Adrenal gland (tissue), 19 donors: ENCODE measurements at regions of chr2 and their contacts with region 1.

Region 1: DNA sequence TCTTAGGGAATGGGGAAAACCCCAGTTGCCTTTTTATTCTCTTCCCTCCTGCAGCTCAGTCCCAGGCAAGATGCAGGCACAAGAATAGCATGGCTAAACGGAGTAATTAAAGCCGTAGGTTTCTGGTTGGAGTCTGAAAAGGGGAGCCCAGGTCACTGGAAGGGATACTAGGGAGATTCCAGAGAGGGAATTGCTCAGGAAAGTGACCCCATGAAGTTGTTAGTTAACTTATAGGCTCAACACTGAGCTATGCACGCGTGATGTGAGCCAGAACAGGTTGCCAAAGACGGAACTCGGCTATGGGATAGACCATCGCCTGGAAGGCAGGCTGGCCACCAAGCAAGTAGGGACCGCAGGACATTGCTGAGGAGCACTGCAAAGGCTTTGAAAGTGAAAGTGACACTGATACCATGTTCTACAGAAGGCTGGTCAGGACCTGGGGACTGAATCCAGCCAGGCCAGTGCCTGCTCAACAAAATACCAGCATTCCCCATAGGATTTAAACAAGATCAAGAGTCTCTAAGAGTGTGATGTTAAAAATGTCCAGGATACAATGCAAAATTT is 7.3 kb downstream of the FARP2 start:
- DNase-seq: no peak
- H3K4me3 ChIP-seq: no peak overlapping the region
- H3K27ac ChIP-seq: peak overlapping the region in 2 of 5 donors; percentile 41 to 44
- H3K4me1 ChIP-seq: peaks cover 8 to 47% of the 10 kb centered on the region in 2 donors
- H3K27me3 ChIP-seq: no peaks in the 10 kb centered on the region
- CTCF ChIP-seq: no peak
- POLR2A ChIP-seq: no peak

Region 2: GRCh38 chr2:241508240-241509154 is 145.1 kb after region 1 on chr2 and contains the start of gene STK25:
- intact Hi-C with region 1: loop called in 1 of 2 experiments (anchors 10 kb)
- DNase-seq: peak; percentile 98 to 99 (median 98)
- H3K4me3 ChIP-seq: peak within 1 kb of the TSS; percentile 25 to 90 (median 54)
- H3K27ac ChIP-seq: peak within 1 kb of the TSS in 4 of 5 donors; percentile 54 to 89 (median 72)
- H3K4me1 ChIP-seq: peaks cover 21 to 28% of the 10 kb centered on the region in 2 donors
- H3K27me3 ChIP-seq: no peaks in the 10 kb centered on the region
- CTCF ChIP-seq: peak in 1 of 6 experiments; percentile 12
- POLR2A ChIP-seq: peak; percentile 26 to 71
- total RNA-seq, gene STK25: 71.4 to 352 (median 164) TPM

Region 3: GRCh38 chr2:241777686-241778627 is 414.6 kb after region 1 on chr2:
- intact Hi-C with region 1: no loop called
- DNase-seq: no peak
- H3K4me3 ChIP-seq: no peak overlapping the region
- H3K27ac ChIP-seq: no peak overlapping the region
- H3K4me1 ChIP-seq: no peaks in the 10 kb centered on the region
- H3K27me3 ChIP-seq: peaks cover 20% of the 10 kb centered on the region
- CTCF ChIP-seq: no peak
- POLR2A ChIP-seq: no peak